ENCODE measurements at regions of chr13 and their contacts with region 1.

Region 1: GRCh38 chr13:41075034-41075433 is 13.7 kb downstream of the WBP4 start:
- DNase-seq: no peak
- H3K4me3 ChIP-seq: no peak overlapping the region
- H3K27ac ChIP-seq: no peak overlapping the region
- H3K4me1 ChIP-seq: no peaks in the 10 kb centered on the region
- H3K27me3 ChIP-seq: no peaks in the 10 kb centered on the region
- CTCF ChIP-seq: peak in 2 of 3 experiments; percentile 26 to 55; a peak in 3 of 4 replicates
- EP300 ChIP-seq: no peak
- POLR2A ChIP-seq: no peak
- RAD21 ChIP-seq: peak; percentile 76 to 80

Region 2: DNA sequence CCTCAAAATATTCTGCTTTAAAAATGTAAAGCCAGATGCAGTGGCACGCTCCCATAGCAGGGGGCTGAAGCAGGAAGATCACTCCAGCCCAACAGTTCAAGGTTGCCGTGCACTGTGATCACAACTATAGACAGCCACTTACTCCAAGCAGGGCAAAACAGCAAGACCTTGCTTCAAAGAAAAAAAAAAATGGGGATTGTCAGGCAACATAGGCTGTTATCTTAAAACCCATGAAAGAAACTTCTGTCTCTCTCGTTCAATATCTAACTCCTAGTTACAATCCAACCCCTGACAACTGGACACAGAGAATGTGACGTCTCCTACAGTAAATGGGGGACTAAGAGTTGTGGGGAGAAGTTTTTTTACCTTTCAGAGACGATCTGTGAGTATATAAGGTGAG is 73.3 kb before region 1 on chr13:
- CTCF ChIA-PET with region 1: no interaction called
- POLR2A ChIA-PET with region 1: no interaction called
- DNase-seq: no peak
- H3K4me3 ChIP-seq: no peak overlapping the region
- H3K27ac ChIP-seq: no peak overlapping the region
- H3K4me1 ChIP-seq: peaks cover 0 to 2% (median 0%) of the 10 kb centered on the region in 4 experiments; a peak in 2 of 7 replicates
- H3K27me3 ChIP-seq: no peaks in the 10 kb centered on the region
- CTCF ChIP-seq: no peak
- EP300 ChIP-seq: no peak
- POLR2A ChIP-seq: no peak
- RAD21 ChIP-seq: no peak

Region 3: GRCh38 chr13:41182231-41182630 is 107.2 kb after region 1 on chr13:
- CTCF ChIA-PET with region 1: no interaction called
- POLR2A ChIA-PET with region 1: no interaction called
- DNase-seq: no peak
- H3K4me3 ChIP-seq: no peak overlapping the region
- H3K27ac ChIP-seq: no peak overlapping the region
- H3K4me1 ChIP-seq: no peaks in the 10 kb centered on the region
- H3K27me3 ChIP-seq: no peaks in the 10 kb centered on the region
- CTCF ChIP-seq: no peak
- EP300 ChIP-seq: no peak
- POLR2A ChIP-seq: no peak
- RAD21 ChIP-seq: no peak

Region 4: GRCh38 chr13:41196620-41197019 is 121.6 kb after region 1 on chr13:
- CTCF ChIA-PET with region 1: interaction called, 19 read pairs
- POLR2A ChIA-PET with region 1: no interaction called
- DNase-seq: no peak
- H3K4me3 ChIP-seq: no peak overlapping the region
- H3K27ac ChIP-seq: no peak overlapping the region
- H3K4me1 ChIP-seq: peaks cover 0 to 5% (median 2%) of the 10 kb centered on the region in 4 experiments; a peak in 3 of 7 replicates
- H3K27me3 ChIP-seq: no peaks in the 10 kb centered on the region
- CTCF ChIP-seq: peak in 2 of 3 experiments; percentile 24 to 31; a peak in 2 of 4 replicates
- EP300 ChIP-seq: no peak
- POLR2A ChIP-seq: no peak
- RAD21 ChIP-seq: peak; percentile 49 to 56; a peak in 3 of 4 replicates

Region 5: GRCh38 chr13:41222259-41222852 is 147.3 kb after region 1 on chr13:
- CTCF ChIA-PET with region 1: interaction called, 32 read pairs
- POLR2A ChIA-PET with region 1: interaction called, 3 read pairs
- DNase-seq: peak in 1 of 2 experiments; percentile 62
- H3K4me3 ChIP-seq: no peak overlapping the region
- H3K27ac ChIP-seq: no peak overlapping the region
- H3K4me1 ChIP-seq: no peaks in the 10 kb centered on the region
- H3K27me3 ChIP-seq: no peaks in the 10 kb centered on the region
- CTCF ChIP-seq: peak in 2 of 3 experiments; percentile 60 to 82; a peak in 2 of 4 replicates
- EP300 ChIP-seq: no peak
- POLR2A ChIP-seq: no peak
- RAD21 ChIP-seq: peak; percentile 69 to 70